SK-N-SH (cell line): ENCODE measurements at regions of chr17 and their contacts with region 1.

Region 1: GRCh38 chr17:50200457-50201275 is 765 bp downstream of the COL1A1 start:
- DNase-seq: peak; percentile 95
- H3K4me3 ChIP-seq: peak overlapping the region; percentile 74 to 96
- H3K27ac ChIP-seq: peak overlapping the region; percentile 79 to 100
- H3K4me1 ChIP-seq: peaks cover 37 to 62% of the 10 kb centered on the region in 2 experiments
- H3K27me3 ChIP-seq: no peaks in the 10 kb centered on the region
- CTCF ChIP-seq: peak; percentile 100
- EP300 ChIP-seq: peak in 1 of 2 experiments; percentile 63; a peak in 2 of 4 replicates
- RAD21 ChIP-seq: peak; percentile 87

Region 2: DNA sequence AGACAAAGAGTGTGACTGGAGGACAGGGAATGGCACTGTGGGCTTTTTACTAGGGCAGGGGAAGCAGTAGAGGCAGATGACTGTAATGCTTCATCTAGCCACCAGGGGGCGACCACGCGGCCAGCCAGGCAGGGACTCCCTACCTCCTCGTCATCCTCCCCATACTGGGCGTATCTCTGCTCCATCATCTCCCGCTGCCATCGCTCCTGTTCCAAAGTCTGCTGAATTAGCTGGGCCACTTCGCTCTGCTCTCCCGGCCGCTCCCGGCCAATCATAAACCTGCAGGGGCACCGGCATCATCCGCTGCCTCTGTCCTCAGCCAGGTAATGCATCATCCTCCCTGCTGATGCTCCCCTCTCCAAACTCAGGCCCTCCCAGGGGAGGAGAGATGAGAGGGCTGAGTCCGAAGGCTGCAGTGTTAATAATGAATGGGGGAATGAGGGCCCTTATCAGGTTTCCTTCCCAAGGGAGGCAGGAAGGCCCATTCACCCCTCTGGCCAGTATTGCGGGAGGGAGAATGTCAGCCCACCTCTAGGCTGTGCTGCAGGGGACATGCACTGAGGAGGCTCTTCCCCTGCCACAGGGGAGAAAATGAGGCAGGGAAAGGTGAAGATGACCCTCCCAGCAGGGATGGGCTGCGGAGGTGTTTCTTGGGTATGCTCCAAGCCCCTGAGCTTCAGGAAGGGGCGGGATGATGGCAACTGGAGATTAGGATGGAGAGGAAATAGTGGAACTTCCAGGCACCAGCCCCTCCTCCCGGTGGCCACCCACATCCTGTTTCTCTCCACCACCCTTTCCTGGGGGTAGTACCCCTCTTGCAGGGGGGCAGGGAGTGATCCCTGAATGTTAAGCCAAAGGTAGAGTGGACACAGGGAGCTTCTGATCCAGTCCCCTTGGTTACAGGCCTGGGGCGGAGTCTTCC is 60.5 kb before region 1 on chr17:
- CTCF ChIA-PET with region 1: interaction called, 12 read pairs
- POLR2A ChIA-PET with region 1: no interaction called
- DNase-seq: peak; percentile 98
- H3K4me3 ChIP-seq: no peak overlapping the region; a peak in 1 of 4 replicates
- H3K27ac ChIP-seq: peak overlapping the region in 1 of 2 experiments; percentile 40; a peak in 2 of 4 replicates
- H3K4me1 ChIP-seq: peaks cover 0 to 7% of the 10 kb centered on the region in 2 experiments; a peak in 1 of 4 replicates
- H3K27me3 ChIP-seq: no peaks in the 10 kb centered on the region
- CTCF ChIP-seq: peak; percentile 96
- EP300 ChIP-seq: peak in 1 of 2 experiments; percentile 27; a peak in 1 of 4 replicates
- RAD21 ChIP-seq: peak; percentile 82

Region 3: DNA sequence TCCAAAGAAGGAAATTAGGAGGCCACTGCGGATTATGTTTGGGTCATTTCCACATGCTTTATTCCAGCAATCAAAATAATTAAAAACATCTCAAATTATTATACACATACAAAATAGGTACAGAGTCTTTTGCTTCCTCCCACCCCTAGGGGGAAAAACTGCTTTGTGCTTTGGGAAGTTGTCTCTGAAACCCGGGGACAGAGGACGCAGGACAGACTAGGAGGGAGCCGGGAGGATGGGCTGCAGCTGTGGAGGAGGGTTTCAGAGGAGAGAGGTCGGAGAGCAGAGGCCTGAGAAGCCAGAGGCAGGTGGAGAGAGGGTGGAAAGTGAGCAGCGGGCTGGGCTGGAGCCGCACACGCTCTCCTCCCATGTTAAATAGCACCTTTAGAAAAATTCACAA is 16.6 kb before region 1 on chr17:
- CTCF ChIA-PET with region 1: interaction called, 517 read pairs
- POLR2A ChIA-PET with region 1: no interaction called
- DNase-seq: peak; percentile 71
- H3K4me3 ChIP-seq: no peak overlapping the region
- H3K27ac ChIP-seq: peak overlapping the region in 1 of 2 experiments; percentile 100; a peak in 2 of 4 replicates
- H3K4me1 ChIP-seq: peaks cover 0 to 17% of the 10 kb centered on the region in 2 experiments; a peak in 1 of 4 replicates
- H3K27me3 ChIP-seq: no peaks in the 10 kb centered on the region
- CTCF ChIP-seq: peak; percentile 46
- EP300 ChIP-seq: no peak
- RAD21 ChIP-seq: no peak

Region 4: GRCh38 chr17:50258647-50259476 is 58.2 kb after region 1 on chr17:
- CTCF ChIA-PET with region 1: interaction called, 2,150 read pairs
- POLR2A ChIA-PET with region 1: no interaction called
- DNase-seq: peak; percentile 85
- H3K4me3 ChIP-seq: no peak overlapping the region
- H3K27ac ChIP-seq: peak overlapping the region; percentile 3 to 44; a peak in 3 of 4 replicates
- H3K4me1 ChIP-seq: peaks cover 9 to 23% of the 10 kb centered on the region in 2 experiments; a peak in 3 of 4 replicates
- H3K27me3 ChIP-seq: no peaks in the 10 kb centered on the region
- CTCF ChIP-seq: 0 out of 2 replicates have a peak, but pooled peaks have one; percentile 10
- EP300 ChIP-seq: peak in 1 of 2 experiments; percentile 70; a peak in 1 of 4 replicates
- RAD21 ChIP-seq: no peak

Region 5: DNA sequence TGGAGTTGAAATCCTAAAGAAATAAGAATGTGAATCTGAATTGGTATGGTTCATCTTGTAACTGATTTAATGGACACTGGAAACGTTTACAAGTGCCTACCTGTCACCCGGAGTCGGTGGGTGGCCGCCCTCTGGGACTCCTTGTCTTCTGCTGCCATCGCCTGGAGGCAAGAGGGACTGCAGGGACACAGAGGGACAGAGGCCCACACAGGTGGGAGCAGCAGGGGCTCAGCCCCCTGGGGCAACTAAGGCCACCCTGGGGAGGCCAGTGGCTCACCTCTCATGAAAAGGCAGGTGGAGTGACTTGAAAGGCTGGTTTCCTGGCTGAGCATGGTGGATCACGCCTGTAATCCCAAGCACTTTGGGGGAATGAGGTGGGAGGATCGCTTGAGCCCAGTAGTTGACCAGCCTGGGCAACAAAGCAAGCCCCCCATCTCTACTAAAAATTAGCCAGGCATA is 96.8 kb after region 1 on chr17:
- CTCF ChIA-PET with region 1: interaction called, 2,150 read pairs
- POLR2A ChIA-PET with region 1: no interaction called
- DNase-seq: peak; percentile 90
- H3K4me3 ChIP-seq: no peak overlapping the region; a peak in 1 of 4 replicates
- H3K27ac ChIP-seq: no peak overlapping the region
- H3K4me1 ChIP-seq: no peaks in the 10 kb centered on the region
- H3K27me3 ChIP-seq: no peaks in the 10 kb centered on the region
- CTCF ChIP-seq: peak; percentile 99
- EP300 ChIP-seq: no peak
- RAD21 ChIP-seq: peak; percentile 100

Region 6: GRCh38 chr17:50361561-50362480 is 161.2 kb after region 1 on chr17:
- CTCF ChIA-PET with region 1: interaction called, 13 read pairs
- POLR2A ChIA-PET with region 1: no interaction called
- DNase-seq: peak; percentile 90
- H3K4me3 ChIP-seq: no peak overlapping the region; a peak in 1 of 4 replicates
- H3K27ac ChIP-seq: peak overlapping the region in 1 of 2 experiments; percentile 59; a peak in 2 of 4 replicates
- H3K4me1 ChIP-seq: peaks cover 9 to 25% of the 10 kb centered on the region in 2 experiments; a peak in 2 of 4 replicates
- H3K27me3 ChIP-seq: no peaks in the 10 kb centered on the region
- CTCF ChIP-seq: peak; percentile 92
- EP300 ChIP-seq: no peak
- RAD21 ChIP-seq: peak; percentile 66